Naive thymus-derived CD4-positive, alpha-beta T cell (primary cell): ENCODE measurements at regions of chr2 and their contacts with region 1.

Region 1: DNA sequence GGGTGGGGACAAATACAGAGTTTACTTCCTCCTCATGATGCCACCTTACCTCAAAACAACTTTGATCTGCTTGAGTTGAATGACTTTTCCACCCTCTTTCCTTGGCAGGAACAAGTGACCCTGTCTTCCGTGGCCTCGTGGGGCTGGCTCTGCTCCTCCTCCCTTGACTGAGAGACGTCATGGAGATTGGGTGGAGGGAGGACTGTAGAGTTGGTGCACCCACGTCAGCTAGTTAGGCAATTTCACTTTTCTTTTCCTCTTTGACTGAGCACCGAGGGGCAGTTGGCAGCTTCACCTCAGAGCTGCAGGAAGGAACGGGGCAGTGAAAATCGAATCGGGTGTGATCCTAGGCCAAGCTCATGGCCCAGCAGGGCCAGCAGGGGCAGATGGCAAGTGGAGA is at the start of gene SP140:
- DNase-seq: peak; percentile 34 to 91 (median 77)
- ATAC-seq: peak; percentile 97
- H3K4me3 ChIP-seq: peak within 1 kb of the TSS; percentile 70
- H3K4me3 Mint-ChIP-seq: peak within 1 kb of the TSS; percentile 82 to 94 (median 87)
- H3K27ac ChIP-seq: peak within 1 kb of the TSS; percentile 79
- H3K27ac Mint-ChIP-seq: peak within 1 kb of the TSS; percentile 95 to 100 (median 98)
- H3K4me1 ChIP-seq: peaks cover 21 to 39% of the 10 kb centered on the region in 2 donors
- H3K4me1 Mint-ChIP-seq: peaks cover 28 to 79% (median 65%) of the 10 kb centered on the region in 7 donors
- H3K27me3 ChIP-seq: no peaks in the 10 kb centered on the region
- H3K27me3 Mint-ChIP-seq: no peaks in the 10 kb centered on the region
- total RNA-seq, gene SP140: 34.5 to 120 (median 45.2) TPM

Region 2: GRCh38 chr2:230447455-230448451 is 222.3 kb after region 1 on chr2:
- CTCF ChIA-PET with region 1: no interaction called
- POLR2A ChIA-PET with region 1: no interaction called
- intact Hi-C with region 1: loop called in 1 of 2 experiments (anchors 5 kb)
- DNase-seq: peak in 6 of 9 donors; percentile 9 to 40 (median 32)
- ATAC-seq: peak; percentile 78
- H3K4me3 ChIP-seq: no peak overlapping the region
- H3K4me3 Mint-ChIP-seq: peak overlapping the region; percentile 16 to 78 (median 59)
- H3K27ac ChIP-seq: peak overlapping the region; percentile 5
- H3K27ac Mint-ChIP-seq: peak overlapping the region; percentile 73 to 94 (median 85)
- H3K4me1 ChIP-seq: peaks cover 17 to 25% of the 10 kb centered on the region in 2 donors
- H3K4me1 Mint-ChIP-seq: peaks cover 33 to 74% (median 64%) of the 10 kb centered on the region in 7 donors
- H3K27me3 ChIP-seq: no peaks in the 10 kb centered on the region
- H3K27me3 Mint-ChIP-seq: no peaks in the 10 kb centered on the region